Stomach (tissue), 19 donors: ENCODE measurements at regions of chr14 and their contacts with region 1.

Region 1: GRCh38 chr14:51776102-51776894 is 84.1 kb upstream of the GNG2 start:
- DNase-seq: peak in 1 of 2 donors; percentile 80
- H3K4me3 ChIP-seq: no peak overlapping the region
- H3K27ac ChIP-seq: no peak overlapping the region
- H3K4me1 ChIP-seq: peaks cover 0 to 8% (median 4%) of the 10 kb centered on the region in 4 donors
- H3K27me3 ChIP-seq: peaks cover 0 to 6% (median 0%) of the 10 kb centered on the region in 3 donors
- CTCF ChIP-seq: peak in 4 of 7 experiments; percentile 27 to 56 (median 38)
- EP300 ChIP-seq: no peak
- POLR2A ChIP-seq: no peak

Region 2: GRCh38 chr14:51285120-51285519 is 491.2 kb before region 1 on chr14:
- intact Hi-C with region 1: loop called (anchors 5 kb)
- DNase-seq: no peak
- H3K4me3 ChIP-seq: no peak overlapping the region
- H3K27ac ChIP-seq: no peak overlapping the region
- H3K4me1 ChIP-seq: peaks cover 0 to 5% (median 0%) of the 10 kb centered on the region in 4 donors
- H3K27me3 ChIP-seq: no peaks in the 10 kb centered on the region
- CTCF ChIP-seq: no peak
- EP300 ChIP-seq: no peak
- POLR2A ChIP-seq: no peak

Region 3: DNA sequence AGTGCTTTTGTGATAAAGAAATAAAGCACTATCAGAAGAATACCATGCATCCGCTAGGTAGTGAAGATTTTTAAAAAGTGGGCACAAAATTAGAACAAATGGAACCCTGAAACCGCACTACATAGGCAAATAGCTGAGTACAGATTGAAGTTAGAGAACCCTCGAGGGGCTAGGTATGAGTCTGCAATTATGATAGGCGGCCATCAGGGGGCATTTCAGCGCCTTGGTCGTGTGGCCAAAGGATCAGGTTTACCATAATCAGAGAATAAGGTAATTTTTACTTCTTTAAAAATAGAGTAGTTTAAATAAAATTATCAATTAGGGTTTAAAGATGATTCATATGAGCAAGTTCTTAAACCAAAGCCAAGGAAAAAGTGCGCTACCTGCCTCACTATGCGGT is 406.5 kb before region 1 on chr14:
- intact Hi-C with region 1: loop called (anchors 10 kb)
- DNase-seq: no peak
- H3K4me3 ChIP-seq: no peak overlapping the region
- H3K27ac ChIP-seq: peak overlapping the region in 1 of 5 donors; percentile 28
- H3K4me1 ChIP-seq: peaks cover 0 to 9% (median 0%) of the 10 kb centered on the region in 4 donors
- H3K27me3 ChIP-seq: no peaks in the 10 kb centered on the region
- CTCF ChIP-seq: peak in 2 of 7 experiments; percentile 12 to 24
- EP300 ChIP-seq: no peak
- POLR2A ChIP-seq: no peak

Region 4: GRCh38 chr14:51651388-51652167 is 124.7 kb before region 1 on chr14 and contains the start of gene FRMD6:
- intact Hi-C with region 1: loop called (anchors 10 kb)
- DNase-seq: peak; percentile 76 to 95
- H3K4me3 ChIP-seq: peak within 1 kb of the TSS; percentile 65 to 96 (median 90)
- H3K27ac ChIP-seq: peak within 1 kb of the TSS; percentile 94 to 97 (median 96)
- H3K4me1 ChIP-seq: peaks cover 4 to 39% (median 24%) of the 10 kb centered on the region in 4 donors
- H3K27me3 ChIP-seq: no peaks in the 10 kb centered on the region
- CTCF ChIP-seq: peak in 5 of 7 experiments; percentile 64 to 83 (median 73)
- EP300 ChIP-seq: no peak
- POLR2A ChIP-seq: peak in 1 of 4 donors; percentile 45
- total RNA-seq, gene FRMD6: 8.4 to 35.2 (median 11.1) TPM

Region 5: GRCh38 chr14:51704545-51704944 is 71.8 kb before region 1 on chr14:
- intact Hi-C with region 1: no loop called
- DNase-seq: no peak
- H3K4me3 ChIP-seq: no peak overlapping the region
- H3K27ac ChIP-seq: no peak overlapping the region
- H3K4me1 ChIP-seq: no peaks in the 10 kb centered on the region
- H3K27me3 ChIP-seq: no peaks in the 10 kb centered on the region
- CTCF ChIP-seq: no peak
- EP300 ChIP-seq: no peak
- POLR2A ChIP-seq: no peak